Naive thymus-derived CD4-positive, alpha-beta T cell (primary cell): ENCODE measurements at regions of chr3 and their contacts with region 1.

Region 1: GRCh38 chr3:43621656-43622432 is at the start of gene ANO10:
- DNase-seq: peak; percentile 82 to 99 (median 91)
- ATAC-seq: peak; percentile 97
- H3K4me3 ChIP-seq: peak within 1 kb of the TSS; percentile 84
- H3K4me3 Mint-ChIP-seq: peak within 1 kb of the TSS; percentile 82 to 94 (median 91)
- H3K27ac ChIP-seq: peak within 1 kb of the TSS; percentile 60
- H3K27ac Mint-ChIP-seq: peak within 1 kb of the TSS; percentile 68 to 92 (median 86)
- H3K4me1 ChIP-seq: peaks cover 11 to 15% of the 10 kb centered on the region in 2 donors
- H3K4me1 Mint-ChIP-seq: peaks cover 8 to 26% (median 23%) of the 10 kb centered on the region in 7 donors
- H3K27me3 ChIP-seq: no peaks in the 10 kb centered on the region
- H3K27me3 Mint-ChIP-seq: peaks cover 0 to 15% (median 0%) of the 10 kb centered on the region in 5 donors
- total RNA-seq, gene ANO10: 6.1 to 13.6 (median 9.3) TPM

Region 2: GRCh38 chr3:43105596-43106292 is 516.1 kb before region 1 on chr3 and contains the start of gene POMGNT2:
- CTCF ChIA-PET with region 1: no interaction called
- POLR2A ChIA-PET with region 1: no interaction called
- intact Hi-C with region 1: loop called in 1 of 2 experiments (anchors 2 kb)
- DNase-seq: peak; percentile 78 to 92 (median 88)
- ATAC-seq: peak; percentile 97
- H3K4me3 ChIP-seq: peak within 1 kb of the TSS; percentile 67
- H3K4me3 Mint-ChIP-seq: peak within 1 kb of the TSS; percentile 70 to 88 (median 85)
- H3K27ac ChIP-seq: peak within 1 kb of the TSS; percentile 76
- H3K27ac Mint-ChIP-seq: peak within 1 kb of the TSS in 8 of 9 donors; percentile 46 to 91 (median 71)
- H3K4me1 ChIP-seq: peaks cover 9 to 18% of the 10 kb centered on the region in 2 donors
- H3K4me1 Mint-ChIP-seq: peaks cover 11 to 38% (median 21%) of the 10 kb centered on the region in 7 donors
- H3K27me3 ChIP-seq: no peaks in the 10 kb centered on the region
- H3K27me3 Mint-ChIP-seq: peaks cover 0 to 9% (median 0%) of the 10 kb centered on the region in 5 donors
- total RNA-seq, gene POMGNT2: 3.5 to 7.9 (median 6.2) TPM

Region 3: GRCh38 chr3:43442872-43443395 is 178.9 kb before region 1 on chr3:
- CTCF ChIA-PET with region 1: no interaction called
- POLR2A ChIA-PET with region 1: no interaction called
- intact Hi-C with region 1: no loop called
- DNase-seq: no peak
- ATAC-seq: no peak
- H3K4me3 ChIP-seq: no peak overlapping the region
- H3K4me3 Mint-ChIP-seq: no peak overlapping the region
- H3K27ac ChIP-seq: no peak overlapping the region
- H3K27ac Mint-ChIP-seq: peak overlapping the region in 1 of 9 donors; percentile 92
- H3K4me1 ChIP-seq: no peaks in the 10 kb centered on the region
- H3K4me1 Mint-ChIP-seq: peaks cover 6 to 19% (median 8%) of the 10 kb centered on the region in 7 donors
- H3K27me3 ChIP-seq: no peaks in the 10 kb centered on the region
- H3K27me3 Mint-ChIP-seq: no peaks in the 10 kb centered on the region

Region 4: GRCh38 chr3:43638594-43639447 is 17.0 kb after region 1 on chr3:
- CTCF ChIA-PET with region 1: no interaction called
- POLR2A ChIA-PET with region 1: no interaction called
- intact Hi-C with region 1: no loop called
- DNase-seq: peak in 3 of 9 donors; percentile 7 to 12 (median 8)
- ATAC-seq: peak; percentile 45
- H3K4me3 ChIP-seq: no peak overlapping the region
- H3K4me3 Mint-ChIP-seq: no peak overlapping the region
- H3K27ac ChIP-seq: no peak overlapping the region
- H3K27ac Mint-ChIP-seq: no peak overlapping the region
- H3K4me1 ChIP-seq: no peaks in the 10 kb centered on the region
- H3K4me1 Mint-ChIP-seq: peaks cover 0 to 8% (median 0%) of the 10 kb centered on the region in 7 donors
- H3K27me3 ChIP-seq: no peaks in the 10 kb centered on the region
- H3K27me3 Mint-ChIP-seq: peaks cover 5 to 10% (median 7%) of the 10 kb centered on the region in 5 donors

Region 5: GRCh38 chr3:43690400-43691119 is 68.7 kb after region 1 on chr3 and contains the start of gene ABHD5:
- CTCF ChIA-PET with region 1: no interaction called
- POLR2A ChIA-PET with region 1: interaction called, 5 read pairs
- intact Hi-C with region 1: loop called (anchors 1 kb)
- DNase-seq: peak; percentile 94 to 99 (median 96)
- ATAC-seq: peak; percentile 96
- H3K4me3 ChIP-seq: peak within 1 kb of the TSS; percentile 74
- H3K4me3 Mint-ChIP-seq: peak within 1 kb of the TSS; percentile 91 to 98 (median 94)
- H3K27ac ChIP-seq: peak within 1 kb of the TSS; percentile 85
- H3K27ac Mint-ChIP-seq: peak within 1 kb of the TSS; percentile 90 to 97 (median 92)
- H3K4me1 ChIP-seq: peaks cover 8% of the 10 kb centered on the region in 2 donors
- H3K4me1 Mint-ChIP-seq: peaks cover 11 to 47% (median 37%) of the 10 kb centered on the region in 7 donors
- H3K27me3 ChIP-seq: no peaks in the 10 kb centered on the region
- H3K27me3 Mint-ChIP-seq: peaks cover 0 to 6% (median 0%) of the 10 kb centered on the region in 5 donors
- total RNA-seq, gene ABHD5: 6.1 to 21.0 (median 12.1) TPM

Region 6: GRCh38 chr3:43759297-43759782 is 137.5 kb after region 1 on chr3:
- CTCF ChIA-PET with region 1: no interaction called
- POLR2A ChIA-PET with region 1: interaction called, 6 read pairs
- intact Hi-C with region 1: loop called (anchors 1 to 5 kb)
- DNase-seq: peak in 5 of 9 donors; percentile 2 to 30 (median 26)
- ATAC-seq: peak; percentile 34
- H3K4me3 ChIP-seq: no peak overlapping the region
- H3K4me3 Mint-ChIP-seq: peak overlapping the region in 1 of 10 donors; percentile 12
- H3K27ac ChIP-seq: no peak overlapping the region
- H3K27ac Mint-ChIP-seq: peak overlapping the region in 5 of 9 donors; percentile 56 to 97 (median 84)
- H3K4me1 ChIP-seq: peaks cover 8 to 41% of the 10 kb centered on the region in 2 donors
- H3K4me1 Mint-ChIP-seq: peaks cover 19 to 54% (median 51%) of the 10 kb centered on the region in 7 donors
- H3K27me3 ChIP-seq: no peaks in the 10 kb centered on the region
- H3K27me3 Mint-ChIP-seq: peaks cover 0 to 9% (median 0%) of the 10 kb centered on the region in 5 donors

Region 7: DNA sequence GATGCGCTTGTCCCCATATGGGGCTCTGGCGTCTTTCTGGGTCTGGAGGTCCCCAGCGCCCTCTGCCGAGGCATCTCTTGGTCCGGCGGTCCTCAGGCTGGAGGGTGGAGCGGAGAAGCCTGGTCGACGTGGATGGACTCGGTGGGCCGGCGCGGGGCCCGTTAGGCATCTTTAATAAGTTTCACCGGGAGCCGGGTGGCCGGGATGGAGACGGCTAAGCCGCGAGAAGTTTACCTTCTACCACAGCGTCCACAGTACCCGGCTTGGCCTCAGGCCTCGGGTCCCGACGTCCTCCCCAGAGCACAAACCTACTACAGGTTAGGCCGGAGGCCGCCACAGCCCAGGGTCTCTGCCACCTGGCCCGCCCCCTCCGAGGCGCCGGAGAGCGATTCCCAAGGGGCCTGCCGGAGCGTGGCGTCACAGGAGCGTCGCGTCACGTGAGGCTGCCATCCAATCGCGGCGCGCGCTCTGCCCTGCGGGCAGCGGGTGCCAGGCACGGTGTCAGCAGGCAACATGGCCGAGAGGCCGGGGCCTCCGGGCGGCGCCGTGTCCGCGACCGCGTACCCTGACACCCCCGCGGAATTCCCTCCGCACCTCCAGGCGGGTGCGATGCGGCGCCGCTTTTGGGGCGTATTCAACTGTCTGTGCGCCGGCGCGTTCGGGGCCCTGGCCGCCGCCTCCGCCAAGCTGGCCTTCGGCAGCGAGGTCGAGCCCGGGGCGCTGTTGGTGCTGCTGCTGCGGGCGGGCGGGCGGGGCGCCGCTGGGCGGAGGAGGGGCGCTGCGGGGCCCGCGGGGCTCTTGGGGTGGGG is 1239.8 kb after region 1 on chr3 and contains the start of gene TMEM42:
- CTCF ChIA-PET with region 1: no interaction called
- POLR2A ChIA-PET with region 1: no interaction called
- intact Hi-C with region 1: loop called (anchors 2 to 5 kb)
- DNase-seq: peak; percentile 81 to 89 (median 84)
- ATAC-seq: peak; percentile 97
- H3K4me3 ChIP-seq: peak within 1 kb of the TSS; percentile 78
- H3K4me3 Mint-ChIP-seq: peak within 1 kb of the TSS; percentile 88 to 92 (median 91)
- H3K27ac ChIP-seq: peak within 1 kb of the TSS; percentile 76
- H3K27ac Mint-ChIP-seq: peak within 1 kb of the TSS; percentile 86 to 97 (median 92)
- H3K4me1 ChIP-seq: peaks cover 15 to 29% of the 10 kb centered on the region in 2 donors
- H3K4me1 Mint-ChIP-seq: peaks cover 23 to 48% (median 43%) of the 10 kb centered on the region in 7 donors
- H3K27me3 ChIP-seq: no peaks in the 10 kb centered on the region
- H3K27me3 Mint-ChIP-seq: no peaks in the 10 kb centered on the region
- total RNA-seq, gene TMEM42: 12.1 to 25.1 (median 16.4) TPM

Region 8: GRCh38 chr3:44913868-44914468 is 1292.1 kb after region 1 on chr3:
- CTCF ChIA-PET with region 1: no interaction called
- POLR2A ChIA-PET with region 1: no interaction called
- intact Hi-C with region 1: no loop called
- DNase-seq: peak; percentile 27 to 69 (median 53)
- ATAC-seq: peak; percentile 70
- H3K4me3 ChIP-seq: no peak overlapping the region
- H3K4me3 Mint-ChIP-seq: no peak overlapping the region
- H3K27ac ChIP-seq: no peak overlapping the region
- H3K27ac Mint-ChIP-seq: no peak overlapping the region
- H3K4me1 ChIP-seq: no peaks in the 10 kb centered on the region
- H3K4me1 Mint-ChIP-seq: peaks cover 0 to 4% (median 0%) of the 10 kb centered on the region in 7 donors
- H3K27me3 ChIP-seq: no peaks in the 10 kb centered on the region
- H3K27me3 Mint-ChIP-seq: peaks cover 13 to 19% (median 14%) of the 10 kb centered on the region in 5 donors